Activated B cell treated with CpG ODN at 0.5 μM for 24 hours (primary cell): ENCODE measurements at regions of chr4 and their contacts with region 1.

Region 1: GRCh38 chr4:165131247-165131832 is 18.7 kb upstream of the TMEM192 start:
- DNase-seq: peak; percentile 51
- ATAC-seq: peak; percentile 85
- H3K4me3 Mint-ChIP-seq: no peak overlapping the region
- H3K27ac Mint-ChIP-seq: no peak overlapping the region
- H3K4me1 Mint-ChIP-seq: peaks cover 40% of the 10 kb centered on the region
- H3K27me3 Mint-ChIP-seq: no peaks in the 10 kb centered on the region
- CTCF ChIP-seq: peak; percentile 77

Region 2: GRCh38 chr4:165016971-165017370 is 114.4 kb before region 1 on chr4:
- CTCF ChIA-PET with region 1: no interaction called
- POLR2A ChIA-PET with region 1: no interaction called
- intact Hi-C with region 1: no loop called
- DNase-seq: no peak
- ATAC-seq: no peak
- H3K4me3 Mint-ChIP-seq: no peak overlapping the region
- H3K27ac Mint-ChIP-seq: no peak overlapping the region
- H3K4me1 Mint-ChIP-seq: no peaks in the 10 kb centered on the region
- H3K27me3 Mint-ChIP-seq: no peaks in the 10 kb centered on the region
- CTCF ChIP-seq: no peak

Region 3: GRCh38 chr4:165207431-165208220 is 76.3 kb after region 1 on chr4 and contains the start of gene KLHL2:
- CTCF ChIA-PET with region 1: no interaction called
- POLR2A ChIA-PET with region 1: interaction called, 3 read pairs
- intact Hi-C with region 1: loop called (anchors 1 kb)
- DNase-seq: peak; percentile 76
- ATAC-seq: peak; percentile 90
- H3K4me3 Mint-ChIP-seq: peak within 1 kb of the TSS; percentile 94
- H3K27ac Mint-ChIP-seq: peak within 1 kb of the TSS; percentile 91
- H3K4me1 Mint-ChIP-seq: peaks cover 73% of the 10 kb centered on the region
- H3K27me3 Mint-ChIP-seq: no peaks in the 10 kb centered on the region
- CTCF ChIP-seq: no peak
- total RNA-seq, gene KLHL2: 21.5 and 21.9 TPM in 2 replicates

Region 4: GRCh38 chr4:165301833-165302232 is 170.5 kb after region 1 on chr4:
- CTCF ChIA-PET with region 1: no interaction called
- POLR2A ChIA-PET with region 1: no interaction called
- intact Hi-C with region 1: no loop called
- DNase-seq: no peak
- ATAC-seq: peak; percentile 49
- H3K4me3 Mint-ChIP-seq: peak overlapping the region; percentile 42
- H3K27ac Mint-ChIP-seq: peak overlapping the region; percentile 2
- H3K4me1 Mint-ChIP-seq: peaks cover 14% of the 10 kb centered on the region
- H3K27me3 Mint-ChIP-seq: no peaks in the 10 kb centered on the region
- CTCF ChIP-seq: no peak

Region 5: DNA sequence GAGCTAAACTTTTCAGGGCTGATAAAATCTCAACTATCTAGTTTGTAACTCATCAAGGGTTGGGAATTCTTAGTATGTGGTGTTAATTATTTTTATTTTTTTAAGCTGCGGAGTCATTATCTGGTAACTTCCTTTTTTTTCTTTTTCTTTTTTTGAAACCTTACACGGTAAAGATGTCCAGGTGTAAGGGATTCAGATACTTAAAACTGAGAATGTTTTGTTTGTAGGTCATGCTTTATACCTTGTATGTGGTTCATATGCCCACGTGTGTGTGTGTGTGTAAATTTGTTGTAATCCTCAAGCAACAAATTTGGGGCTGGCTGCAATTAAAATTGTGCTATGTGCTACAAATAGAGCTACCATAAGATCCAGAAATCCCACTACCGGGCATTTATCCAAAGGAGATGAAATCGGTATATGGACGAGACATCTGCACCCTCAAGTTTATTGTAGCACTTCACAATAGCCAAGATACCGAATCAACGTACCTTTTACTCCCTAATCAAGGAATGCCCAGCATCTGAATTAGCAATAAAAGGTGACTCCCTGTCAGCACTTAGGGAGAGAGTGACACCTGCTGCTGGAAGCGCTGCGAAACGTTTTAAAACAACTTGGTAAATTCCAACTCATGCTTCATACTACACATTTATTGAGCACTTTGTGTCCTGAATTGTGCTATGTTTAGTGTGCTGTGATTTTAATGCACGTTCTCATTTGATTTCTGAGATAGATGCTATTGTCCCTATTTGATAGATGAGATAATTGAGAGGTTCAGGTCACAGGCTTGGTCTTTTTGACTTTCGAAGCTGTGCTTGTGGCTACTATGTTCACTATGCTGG is 212.2 kb after region 1 on chr4:
- CTCF ChIA-PET with region 1: interaction called, 38 read pairs
- POLR2A ChIA-PET with region 1: no interaction called
- intact Hi-C with region 1: loop called (anchors 1 kb)
- DNase-seq: no peak
- ATAC-seq: no peak
- H3K4me3 Mint-ChIP-seq: no peak overlapping the region
- H3K27ac Mint-ChIP-seq: no peak overlapping the region
- H3K4me1 Mint-ChIP-seq: no peaks in the 10 kb centered on the region
- H3K27me3 Mint-ChIP-seq: no peaks in the 10 kb centered on the region
- CTCF ChIP-seq: no peak

Region 6: GRCh38 chr4:165569031-165569430 is 437.7 kb after region 1 on chr4:
- CTCF ChIA-PET with region 1: no interaction called
- POLR2A ChIA-PET with region 1: no interaction called
- intact Hi-C with region 1: no loop called
- DNase-seq: no peak
- ATAC-seq: no peak
- H3K4me3 Mint-ChIP-seq: no peak overlapping the region
- H3K27ac Mint-ChIP-seq: no peak overlapping the region
- H3K4me1 Mint-ChIP-seq: no peaks in the 10 kb centered on the region
- H3K27me3 Mint-ChIP-seq: no peaks in the 10 kb centered on the region
- CTCF ChIP-seq: no peak

Region 7: DNA sequence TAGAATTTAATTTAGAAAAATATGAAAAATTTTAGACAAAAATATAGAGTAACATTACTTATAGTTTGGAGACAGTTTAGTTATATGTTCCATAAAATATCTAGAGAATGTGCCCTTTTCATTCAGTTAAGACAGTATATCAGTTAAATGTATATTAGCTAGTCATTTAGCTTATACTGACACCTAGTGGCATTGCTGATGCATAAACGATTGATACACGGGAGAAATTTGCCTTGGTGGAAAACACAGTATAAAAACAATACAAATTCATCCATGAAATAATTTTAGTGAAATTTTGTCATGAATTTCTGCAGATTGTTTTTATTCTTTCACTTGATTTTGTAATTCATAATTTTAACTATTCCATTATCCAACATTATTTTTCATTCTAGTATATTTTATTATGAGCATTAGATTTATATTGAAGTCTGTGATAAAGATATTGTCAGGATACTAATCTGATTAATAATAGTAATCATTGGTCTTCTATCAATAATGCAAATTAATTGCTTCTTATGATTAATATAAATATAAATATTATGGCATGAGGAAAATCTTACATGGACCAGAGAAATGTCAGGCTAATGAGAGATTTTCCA is 960.7 kb after region 1 on chr4:
- CTCF ChIA-PET with region 1: interaction called, 4 read pairs
- POLR2A ChIA-PET with region 1: no interaction called
- intact Hi-C with region 1: loop called (anchors 1 kb)
- DNase-seq: no peak
- ATAC-seq: no peak
- H3K4me3 Mint-ChIP-seq: no peak overlapping the region
- H3K27ac Mint-ChIP-seq: no peak overlapping the region
- H3K4me1 Mint-ChIP-seq: no peaks in the 10 kb centered on the region
- H3K27me3 Mint-ChIP-seq: no peaks in the 10 kb centered on the region
- CTCF ChIP-seq: no peak